ENCODE measurements at regions of chr7 and their contacts with region 1.

Region 1: GRCh38 chr7:96837593-96837992 is 127.9 kb upstream of the SEM1 start:
- DNase-seq: peak; percentile 54
- H3K4me3 Mint-ChIP-seq: no peak overlapping the region
- H3K27ac Mint-ChIP-seq: no peak overlapping the region
- H3K4me1 Mint-ChIP-seq: peaks cover 36% of the 10 kb centered on the region
- H3K27me3 Mint-ChIP-seq: peaks cover 39% of the 10 kb centered on the region

Region 2: GRCh38 chr7:95501261-95501832 is 1336.2 kb before region 1 on chr7:
- CTCF ChIA-PET with region 1: no interaction called
- intact Hi-C with region 1: loop called (anchors 1 kb)
- DNase-seq: peak; percentile 52
- H3K4me3 Mint-ChIP-seq: no peak overlapping the region
- H3K27ac Mint-ChIP-seq: peak overlapping the region; percentile 37
- H3K4me1 Mint-ChIP-seq: peaks cover 24% of the 10 kb centered on the region
- H3K27me3 Mint-ChIP-seq: peaks cover 25% of the 10 kb centered on the region

Region 3: DNA sequence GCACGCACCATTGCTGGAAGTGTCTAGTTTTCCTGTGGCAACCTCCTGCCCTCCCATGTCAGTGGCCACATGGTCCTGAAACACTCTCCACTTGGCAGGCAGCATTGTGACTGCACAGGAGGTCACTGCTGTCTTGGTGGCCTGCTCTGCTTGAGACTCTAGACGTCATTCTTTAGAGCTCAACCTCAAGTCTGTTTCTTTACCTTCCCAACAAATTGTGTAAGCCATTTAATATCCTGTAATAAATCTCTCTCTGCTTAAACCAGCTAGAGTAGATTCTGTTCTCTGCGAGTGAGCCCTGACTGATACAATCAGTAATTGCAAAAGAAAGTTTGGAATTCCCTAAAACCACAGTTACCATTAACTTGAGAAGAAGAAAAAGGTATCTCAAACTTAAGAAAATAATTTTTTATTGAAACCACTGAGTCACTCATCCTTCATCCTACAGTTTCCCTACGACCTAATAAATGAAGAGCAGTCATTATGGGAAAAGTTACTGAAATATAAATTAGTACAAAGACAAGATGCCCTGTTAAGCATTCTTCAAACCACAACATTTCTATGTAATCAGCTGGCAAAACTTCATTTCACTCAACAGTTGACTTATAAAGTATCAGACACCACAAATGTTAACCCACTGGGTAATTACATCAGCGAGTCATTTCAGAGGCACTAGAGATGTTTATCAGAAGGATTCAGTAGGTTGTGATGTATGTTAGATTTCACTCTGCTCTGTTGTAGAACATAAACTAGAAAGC is 533.7 kb before region 1 on chr7:
- CTCF ChIA-PET with region 1: no interaction called
- intact Hi-C with region 1: loop called (anchors 1 kb)
- DNase-seq: no peak
- H3K4me3 Mint-ChIP-seq: no peak overlapping the region
- H3K27ac Mint-ChIP-seq: peak overlapping the region; percentile 73
- H3K4me1 Mint-ChIP-seq: peaks cover 39% of the 10 kb centered on the region
- H3K27me3 Mint-ChIP-seq: no peaks in the 10 kb centered on the region

Region 4: GRCh38 chr7:96479015-96479645 is 358.5 kb before region 1 on chr7:
- CTCF ChIA-PET with region 1: no interaction called
- intact Hi-C with region 1: loop called (anchors 5 kb)
- DNase-seq: no peak
- H3K4me3 Mint-ChIP-seq: peak overlapping the region; percentile 36
- H3K27ac Mint-ChIP-seq: no peak overlapping the region
- H3K4me1 Mint-ChIP-seq: peaks cover 12% of the 10 kb centered on the region
- H3K27me3 Mint-ChIP-seq: peaks cover 3% of the 10 kb centered on the region

Region 5: DNA sequence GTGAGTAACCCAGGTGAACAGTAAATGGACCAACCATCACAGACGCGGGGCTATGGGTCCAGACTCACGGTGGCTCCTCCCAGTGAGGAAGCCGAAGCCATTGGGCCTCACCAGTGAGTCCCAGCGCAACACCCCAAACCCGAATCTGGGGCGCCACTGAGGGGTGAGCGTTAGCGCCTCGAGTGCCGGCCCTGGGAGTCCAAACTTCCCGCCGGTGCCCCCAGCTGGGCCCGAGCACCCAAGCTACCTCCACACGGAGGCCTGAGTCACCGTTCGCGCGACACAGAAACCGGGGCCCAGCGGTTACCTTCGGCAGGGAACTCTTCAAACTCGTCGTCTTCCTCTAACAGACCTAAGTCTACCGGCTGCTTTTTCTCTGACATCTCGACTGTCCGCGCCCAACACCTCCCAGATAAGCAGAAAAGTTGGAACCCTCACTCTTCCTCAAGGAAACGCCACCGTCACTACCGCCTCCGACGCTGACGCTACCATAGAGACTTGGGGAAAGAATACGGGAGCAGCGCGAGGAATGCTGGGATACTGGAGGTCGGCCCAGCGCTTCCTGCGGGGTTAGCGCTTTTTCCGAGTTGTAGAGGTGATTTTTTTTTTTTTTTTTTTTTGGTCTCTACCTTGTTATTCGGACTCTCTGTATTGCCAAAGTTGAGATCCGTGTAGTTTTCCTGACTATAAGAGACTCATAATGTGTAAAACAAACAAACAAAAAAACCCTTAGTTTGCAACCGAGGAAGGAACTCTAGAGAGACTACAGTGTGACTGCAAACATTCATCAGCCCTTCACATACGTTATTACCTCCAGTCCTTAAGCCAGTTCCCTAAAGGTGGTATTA is 128.0 kb before region 1 on chr7 and contains the start of gene SEM1:
- CTCF ChIA-PET with region 1: no interaction called
- intact Hi-C with region 1: loop called (anchors 1 kb)
- DNase-seq: peak; percentile 77
- H3K4me3 Mint-ChIP-seq: peak within 1 kb of the TSS; percentile 92
- H3K27ac Mint-ChIP-seq: peak within 1 kb of the TSS; percentile 93
- H3K4me1 Mint-ChIP-seq: peaks cover 27% of the 10 kb centered on the region
- H3K27me3 Mint-ChIP-seq: peaks cover 4% of the 10 kb centered on the region
- total RNA-seq, gene SEM1: 37.7 to 47.5 TPM

Region 6: DNA sequence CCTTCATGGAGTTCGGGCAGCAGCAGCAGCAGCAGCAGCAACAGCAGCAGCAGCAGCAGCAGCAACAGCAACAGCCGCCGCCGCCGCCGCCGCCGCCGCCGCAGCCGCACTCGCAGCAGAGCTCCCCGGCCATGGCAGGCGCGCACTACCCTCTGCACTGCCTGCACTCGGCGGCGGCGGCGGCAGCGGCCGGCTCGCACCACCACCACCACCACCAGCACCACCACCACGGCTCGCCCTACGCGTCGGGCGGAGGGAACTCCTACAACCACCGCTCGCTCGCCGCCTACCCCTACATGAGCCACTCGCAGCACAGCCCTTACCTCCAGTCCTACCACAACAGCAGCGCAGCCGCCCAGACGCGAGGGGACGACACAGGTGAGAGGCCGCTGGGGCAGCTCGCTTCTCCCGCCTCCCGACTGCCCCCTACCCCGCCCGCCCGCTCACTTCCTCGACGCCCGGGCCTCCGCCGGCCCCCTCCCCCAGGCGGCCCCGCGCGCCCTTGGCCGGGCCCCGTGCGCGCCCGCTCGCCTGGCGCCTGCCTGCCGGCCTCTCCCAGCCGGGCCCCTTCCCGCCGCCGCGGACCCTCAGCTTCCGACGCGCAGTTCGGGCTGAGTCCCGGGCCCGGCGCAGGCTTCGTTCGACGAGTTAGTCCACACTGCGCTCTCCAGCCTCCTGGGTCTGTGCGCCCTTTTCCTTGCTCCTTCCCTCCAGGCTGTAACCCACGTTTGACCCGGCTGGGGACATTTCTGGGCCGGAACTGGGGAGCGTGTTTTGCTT is 168.6 kb after region 1 on chr7:
- CTCF ChIA-PET with region 1: no interaction called
- intact Hi-C with region 1: loop called (anchors 5 kb)
- DNase-seq: peak; percentile 42
- H3K4me3 Mint-ChIP-seq: peak overlapping the region; percentile 72
- H3K27ac Mint-ChIP-seq: no peak overlapping the region
- H3K4me1 Mint-ChIP-seq: peaks cover 19% of the 10 kb centered on the region
- H3K27me3 Mint-ChIP-seq: peaks cover 85% of the 10 kb centered on the region

Region 7: GRCh38 chr7:97027427-97028234 is 190.0 kb after region 1 on chr7:
- CTCF ChIA-PET with region 1: no interaction called
- intact Hi-C with region 1: no loop called
- DNase-seq: peak; percentile 83
- H3K4me3 Mint-ChIP-seq: peak overlapping the region; percentile 56
- H3K27ac Mint-ChIP-seq: no peak overlapping the region
- H3K4me1 Mint-ChIP-seq: peaks cover 44% of the 10 kb centered on the region
- H3K27me3 Mint-ChIP-seq: peaks cover 62% of the 10 kb centered on the region

Region 8: GRCh38 chr7:97630116-97630515 is 792.5 kb after region 1 on chr7:
- CTCF ChIA-PET with region 1: no interaction called
- intact Hi-C with region 1: no loop called
- DNase-seq: no peak
- H3K4me3 Mint-ChIP-seq: no peak overlapping the region
- H3K27ac Mint-ChIP-seq: no peak overlapping the region
- H3K4me1 Mint-ChIP-seq: no peaks in the 10 kb centered on the region
- H3K27me3 Mint-ChIP-seq: peaks cover 8% of the 10 kb centered on the region

Region 9: DNA sequence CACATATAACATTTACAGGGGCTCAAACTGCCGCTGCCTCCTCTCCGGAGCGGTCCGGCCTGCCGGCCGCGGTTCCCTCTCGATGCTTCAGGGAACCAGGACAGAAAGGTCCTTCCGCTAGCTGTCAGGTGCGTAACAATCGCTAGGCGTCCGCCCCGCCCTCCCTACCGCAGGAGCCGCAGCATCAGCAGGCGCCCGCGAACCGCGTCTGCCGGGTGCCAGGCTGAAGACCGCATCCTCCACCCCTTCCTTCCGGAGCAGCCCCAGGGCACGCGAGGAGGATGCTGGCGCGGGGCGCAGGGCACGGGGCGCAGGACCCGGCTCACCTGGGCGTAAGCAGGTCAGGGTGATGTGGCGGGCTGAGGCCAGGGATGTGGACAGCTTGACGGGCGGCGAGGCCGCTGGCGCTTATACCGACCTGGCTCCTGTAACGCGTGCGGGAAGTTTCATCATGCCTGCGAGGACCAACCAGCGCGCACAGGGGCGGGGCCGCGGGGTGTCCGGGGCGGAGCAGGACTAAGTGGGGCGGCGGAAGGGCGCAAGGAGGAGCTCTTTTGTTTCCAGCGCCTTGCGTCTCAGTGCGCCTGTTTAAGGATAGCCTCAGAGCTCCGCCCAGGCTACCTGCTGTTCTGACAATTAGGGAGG is 1034.6 kb after region 1 on chr7 and contains the start of gene ASNS:
- CTCF ChIA-PET with region 1: no interaction called
- intact Hi-C with region 1: loop called (anchors 1 kb)
- DNase-seq: peak; percentile 95
- H3K4me3 Mint-ChIP-seq: peak within 1 kb of the TSS; percentile 88
- H3K27ac Mint-ChIP-seq: peak within 1 kb of the TSS; percentile 93
- H3K4me1 Mint-ChIP-seq: peaks cover 25% of the 10 kb centered on the region
- H3K27me3 Mint-ChIP-seq: no peaks in the 10 kb centered on the region
- total RNA-seq, gene ASNS: 332 to 337 TPM